B cell (primary cell): ENCODE measurements at regions of chr11 and their contacts with region 1.

Region 1: GRCh38 chr11:65329944-65330403 is 3.7 kb upstream of the DPF2 start:
- DNase-seq: peak; percentile 93
- ATAC-seq: peak; percentile 42
- H3K4me3 ChIP-seq: peak overlapping the region in 4 of 5 experiments; percentile 5 to 48 (median 44)
- H3K4me3 Mint-ChIP-seq: peak overlapping the region; percentile 76
- H3K27ac ChIP-seq: peak overlapping the region; percentile 50 to 69
- H3K27ac Mint-ChIP-seq: peak overlapping the region; percentile 90
- H3K4me1 ChIP-seq: peaks cover 23 to 28% of the 10 kb centered on the region in 2 donors
- H3K4me1 Mint-ChIP-seq: peaks cover 22% of the 10 kb centered on the region
- H3K27me3 ChIP-seq: no peaks in the 10 kb centered on the region
- H3K27me3 Mint-ChIP-seq: no peaks in the 10 kb centered on the region
- CTCF ChIP-seq: peak; percentile 86

Region 2: GRCh38 chr11:65261591-65262380 is 68.2 kb before region 1 on chr11 and contains the start of gene POLA2:
- CTCF ChIA-PET with region 1: interaction called, 30 read pairs
- POLR2A ChIA-PET with region 1: interaction called, 8 read pairs
- intact Hi-C with region 1: loop called (anchors 5 kb)
- DNase-seq: peak; percentile 98
- ATAC-seq: peak; percentile 88
- H3K4me3 ChIP-seq: peak within 1 kb of the TSS; percentile 85 to 97 (median 94)
- H3K4me3 Mint-ChIP-seq: peak within 1 kb of the TSS; percentile 94
- H3K27ac ChIP-seq: peak within 1 kb of the TSS; percentile 88 to 91
- H3K27ac Mint-ChIP-seq: peak within 1 kb of the TSS; percentile 99
- H3K4me1 ChIP-seq: peaks cover 11 to 18% of the 10 kb centered on the region in 2 donors
- H3K4me1 Mint-ChIP-seq: peaks cover 24% of the 10 kb centered on the region
- H3K27me3 ChIP-seq: no peaks in the 10 kb centered on the region
- H3K27me3 Mint-ChIP-seq: no peaks in the 10 kb centered on the region
- CTCF ChIP-seq: no peak
- total RNA-seq, gene POLA2: 28.7 and 33.2 TPM in 2 replicates

Region 3: GRCh38 chr11:65274735-65275682 is 55.0 kb before region 1 on chr11:
- CTCF ChIA-PET with region 1: interaction called, 91 read pairs
- POLR2A ChIA-PET with region 1: no interaction called
- intact Hi-C with region 1: loop called (anchors 1 kb)
- DNase-seq: peak; percentile 57
- ATAC-seq: peak; percentile 53
- H3K4me3 ChIP-seq: no peak overlapping the region
- H3K4me3 Mint-ChIP-seq: no peak overlapping the region
- H3K27ac ChIP-seq: no peak overlapping the region
- H3K27ac Mint-ChIP-seq: no peak overlapping the region
- H3K4me1 ChIP-seq: no peaks in the 10 kb centered on the region
- H3K4me1 Mint-ChIP-seq: no peaks in the 10 kb centered on the region
- H3K27me3 ChIP-seq: no peaks in the 10 kb centered on the region
- H3K27me3 Mint-ChIP-seq: no peaks in the 10 kb centered on the region
- CTCF ChIP-seq: peak; percentile 50

Region 4: DNA sequence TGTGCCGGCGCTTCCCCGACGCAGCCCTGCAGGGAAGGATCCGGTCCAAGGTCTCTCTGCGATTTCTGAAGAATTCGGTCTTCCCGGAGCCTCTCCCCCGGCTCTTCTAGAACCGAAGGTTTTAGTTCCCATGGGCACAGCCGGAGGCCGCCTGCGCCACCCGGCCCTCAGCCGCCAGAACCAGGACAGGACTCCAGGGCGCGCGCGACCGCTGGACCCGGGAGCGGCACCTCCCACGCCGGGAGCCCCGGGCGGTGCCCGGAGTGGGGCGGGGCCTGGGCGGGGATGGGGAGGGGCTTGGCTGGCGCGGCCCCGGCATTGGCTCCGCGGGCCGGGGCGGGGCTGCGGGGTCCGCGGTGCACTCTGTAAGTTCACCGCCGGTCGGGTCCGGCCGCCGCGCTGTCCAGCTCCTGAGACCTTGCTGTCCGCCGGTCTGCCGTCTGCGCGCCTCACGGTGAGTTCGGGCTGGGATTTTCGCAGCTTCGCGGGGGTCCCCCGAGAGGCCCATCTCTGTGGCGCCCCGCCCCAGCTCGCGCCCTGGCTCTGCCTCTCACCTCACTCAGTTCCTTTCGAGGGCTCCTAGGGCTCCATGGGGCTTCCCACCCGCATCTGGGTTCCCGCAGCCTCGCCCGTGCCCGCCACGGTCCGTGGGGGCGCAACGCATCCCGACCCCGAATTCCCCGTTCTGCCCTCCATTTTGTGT is 15.3 kb before region 1 on chr11 and contains the start of gene CDC42EP2:
- CTCF ChIA-PET with region 1: interaction called, 214 read pairs
- POLR2A ChIA-PET with region 1: interaction called, 6 read pairs
- intact Hi-C with region 1: loop called (anchors 1 kb)
- DNase-seq: peak; percentile 85
- ATAC-seq: peak; percentile 96
- H3K4me3 ChIP-seq: peak within 1 kb of the TSS; percentile 40 to 85 (median 81)
- H3K4me3 Mint-ChIP-seq: peak within 1 kb of the TSS; percentile 84
- H3K27ac ChIP-seq: peak within 1 kb of the TSS in 1 of 2 donors; percentile 51
- H3K27ac Mint-ChIP-seq: no peak within 1 kb of the TSS
- H3K4me1 ChIP-seq: peaks cover 8 to 17% of the 10 kb centered on the region in 2 donors
- H3K4me1 Mint-ChIP-seq: peaks cover 10% of the 10 kb centered on the region
- H3K27me3 ChIP-seq: peaks cover 0 to 12% (median 5%) of the 10 kb centered on the region in 4 experiments
- H3K27me3 Mint-ChIP-seq: peaks cover 9% of the 10 kb centered on the region
- CTCF ChIP-seq: no peak
- total RNA-seq, gene CDC42EP2: 1.1 and 1.5 TPM in 2 replicates

Region 5: DNA sequence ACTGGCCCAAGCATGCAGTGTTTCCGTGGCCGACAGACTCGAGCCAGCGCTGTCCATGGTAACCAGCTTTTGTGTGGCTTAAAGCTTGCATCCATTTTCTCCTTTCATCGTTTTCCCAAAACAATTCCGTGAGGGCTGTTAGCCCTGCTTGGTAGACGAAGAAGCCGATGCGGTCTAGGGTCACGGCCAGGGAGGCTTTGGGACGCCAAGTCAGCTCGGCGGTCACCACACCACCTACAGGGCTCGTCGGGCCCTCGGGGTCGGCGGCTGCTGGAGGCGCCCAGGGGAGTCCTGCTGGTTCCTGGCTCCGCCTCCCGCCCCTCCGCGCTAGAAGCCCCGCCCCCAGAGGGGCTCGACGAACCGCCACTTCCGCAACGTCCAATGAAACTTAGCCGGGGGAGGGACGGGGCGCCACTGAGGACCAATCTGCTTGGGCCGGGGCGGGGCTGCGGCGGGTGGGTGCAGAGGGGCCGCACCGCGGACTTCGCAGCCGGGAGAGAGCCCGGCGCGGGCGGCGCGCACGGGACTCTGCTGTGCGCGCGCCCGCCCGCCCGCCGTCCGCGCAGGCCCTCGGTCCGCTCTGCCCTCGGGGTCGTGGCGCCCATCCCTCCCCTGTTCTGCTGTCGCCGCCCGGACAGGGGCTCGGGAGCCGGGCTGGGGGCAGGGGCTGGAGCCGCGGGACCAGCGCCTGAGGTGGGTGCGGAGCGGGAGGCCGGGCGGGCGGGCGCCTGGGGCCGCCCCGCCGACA is 24.5 kb after region 1 on chr11 and contains the start of gene TIGD3:
- CTCF ChIA-PET with region 1: interaction called, 65 read pairs
- POLR2A ChIA-PET with region 1: interaction called, 7 read pairs
- intact Hi-C with region 1: loop called (anchors 1 kb)
- DNase-seq: peak; percentile 97
- ATAC-seq: peak; percentile 96
- H3K4me3 ChIP-seq: peak within 1 kb of the TSS; percentile 26 to 79 (median 65)
- H3K4me3 Mint-ChIP-seq: peak within 1 kb of the TSS; percentile 95
- H3K27ac ChIP-seq: peak within 1 kb of the TSS in 1 of 2 donors; percentile 18
- H3K27ac Mint-ChIP-seq: peak within 1 kb of the TSS; percentile 92
- H3K4me1 ChIP-seq: peaks cover 11 to 16% of the 10 kb centered on the region in 2 donors
- H3K4me1 Mint-ChIP-seq: peaks cover 20% of the 10 kb centered on the region
- H3K27me3 ChIP-seq: no peaks in the 10 kb centered on the region
- H3K27me3 Mint-ChIP-seq: no peaks in the 10 kb centered on the region
- CTCF ChIP-seq: no peak
- total RNA-seq, gene TIGD3: 6.1 and 7.5 TPM in 2 replicates

Region 6: DNA sequence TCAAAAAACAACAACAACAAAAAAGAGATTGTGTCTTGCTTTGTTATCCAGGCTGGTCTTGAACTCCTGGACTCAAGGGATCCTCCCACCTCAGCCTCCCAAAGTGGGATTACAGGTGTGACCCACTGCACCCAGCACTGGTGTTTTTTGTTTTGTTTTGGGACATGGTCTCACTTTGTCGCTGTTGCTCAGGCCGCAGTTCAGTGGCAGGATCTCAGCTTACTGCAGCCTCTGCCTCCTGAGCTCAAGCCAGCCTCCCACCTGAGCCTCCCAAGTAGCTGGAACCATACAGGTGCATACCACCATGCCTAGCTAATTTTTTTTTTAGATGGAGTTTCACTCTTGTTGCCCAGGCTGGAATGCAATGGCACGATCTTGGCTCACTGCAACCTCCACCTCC is 182.3 kb after region 1 on chr11:
- CTCF ChIA-PET with region 1: interaction called, 11 read pairs
- POLR2A ChIA-PET with region 1: interaction called, 5 read pairs
- intact Hi-C with region 1: no loop called
- DNase-seq: no peak
- ATAC-seq: no peak
- H3K4me3 ChIP-seq: no peak overlapping the region
- H3K4me3 Mint-ChIP-seq: no peak overlapping the region
- H3K27ac ChIP-seq: no peak overlapping the region
- H3K27ac Mint-ChIP-seq: no peak overlapping the region
- H3K4me1 ChIP-seq: peaks cover 9 to 21% of the 10 kb centered on the region in 2 donors
- H3K4me1 Mint-ChIP-seq: peaks cover 18% of the 10 kb centered on the region
- H3K27me3 ChIP-seq: no peaks in the 10 kb centered on the region
- H3K27me3 Mint-ChIP-seq: no peaks in the 10 kb centered on the region
- CTCF ChIP-seq: no peak